Transverse colon (tissue), 4 donors: ENCODE measurements at regions of chr3 and their contacts with region 1.

Region 1: GRCh38 chr3:66276705-66277274 is 56.0 kb downstream of the SLC25A26 start:
- DNase-seq: peak; percentile 58
- H3K4me3 ChIP-seq: no peak overlapping the region
- H3K27ac ChIP-seq: peak overlapping the region in 1 of 4 donors; percentile 1
- H3K4me1 ChIP-seq: peaks cover 0 to 4% (median 0%) of the 10 kb centered on the region in 4 donors
- H3K27me3 ChIP-seq: no peaks in the 10 kb centered on the region
- CTCF ChIP-seq: peak; percentile 62 to 72 (median 68)
- EP300 ChIP-seq: no peak
- POLR2A ChIP-seq: no peak

Region 2: GRCh38 chr3:66010739-66011655 is 265.8 kb before region 1 on chr3:
- in situ Hi-C with region 1: no loop called
- intact Hi-C with region 1: no loop called
- DNase-seq: no peak
- H3K4me3 ChIP-seq: no peak overlapping the region
- H3K27ac ChIP-seq: no peak overlapping the region
- H3K4me1 ChIP-seq: peaks cover 0 to 4% (median 2%) of the 10 kb centered on the region in 4 donors
- H3K27me3 ChIP-seq: no peaks in the 10 kb centered on the region
- CTCF ChIP-seq: no peak
- EP300 ChIP-seq: no peak
- POLR2A ChIP-seq: no peak

Region 3: DNA sequence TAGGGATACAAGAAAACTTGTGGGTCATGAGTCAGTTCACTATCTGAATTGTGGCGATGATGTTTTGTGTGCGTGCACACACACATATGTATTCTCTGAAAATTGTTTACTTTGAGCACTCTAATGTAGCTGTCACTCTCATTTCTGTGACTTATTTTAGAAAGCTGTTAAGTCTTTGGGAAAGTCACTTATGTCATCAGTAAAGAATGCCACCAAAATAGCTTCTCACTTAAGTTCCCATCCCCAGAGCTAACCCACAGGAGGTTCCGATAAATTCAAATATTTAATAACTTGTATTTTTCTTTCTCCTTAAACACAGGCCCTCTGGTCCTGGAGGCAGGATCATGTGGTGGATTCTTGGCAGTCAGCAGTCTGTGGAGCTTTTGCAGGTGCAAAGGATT is 85.8 kb after region 1 on chr3:
- in situ Hi-C with region 1: loop called in 1 of 4 experiments (anchors 10 kb)
- intact Hi-C with region 1: no loop called
- DNase-seq: no peak
- H3K4me3 ChIP-seq: no peak overlapping the region
- H3K27ac ChIP-seq: no peak overlapping the region
- H3K4me1 ChIP-seq: no peaks in the 10 kb centered on the region
- H3K27me3 ChIP-seq: no peaks in the 10 kb centered on the region
- CTCF ChIP-seq: no peak
- EP300 ChIP-seq: no peak
- POLR2A ChIP-seq: no peak

Region 4: GRCh38 chr3:66372681-66373350 is 96.0 kb after region 1 on chr3:
- in situ Hi-C with region 1: loop called in 1 of 4 experiments (anchors 10 kb)
- intact Hi-C with region 1: loop called (anchors 10 kb)
- DNase-seq: peak; percentile 50
- H3K4me3 ChIP-seq: no peak overlapping the region
- H3K27ac ChIP-seq: no peak overlapping the region
- H3K4me1 ChIP-seq: peaks cover 5 to 18% (median 16%) of the 10 kb centered on the region in 4 donors
- H3K27me3 ChIP-seq: no peaks in the 10 kb centered on the region
- CTCF ChIP-seq: peak; percentile 15 to 38 (median 26)
- EP300 ChIP-seq: no peak
- POLR2A ChIP-seq: no peak

Region 5: DNA sequence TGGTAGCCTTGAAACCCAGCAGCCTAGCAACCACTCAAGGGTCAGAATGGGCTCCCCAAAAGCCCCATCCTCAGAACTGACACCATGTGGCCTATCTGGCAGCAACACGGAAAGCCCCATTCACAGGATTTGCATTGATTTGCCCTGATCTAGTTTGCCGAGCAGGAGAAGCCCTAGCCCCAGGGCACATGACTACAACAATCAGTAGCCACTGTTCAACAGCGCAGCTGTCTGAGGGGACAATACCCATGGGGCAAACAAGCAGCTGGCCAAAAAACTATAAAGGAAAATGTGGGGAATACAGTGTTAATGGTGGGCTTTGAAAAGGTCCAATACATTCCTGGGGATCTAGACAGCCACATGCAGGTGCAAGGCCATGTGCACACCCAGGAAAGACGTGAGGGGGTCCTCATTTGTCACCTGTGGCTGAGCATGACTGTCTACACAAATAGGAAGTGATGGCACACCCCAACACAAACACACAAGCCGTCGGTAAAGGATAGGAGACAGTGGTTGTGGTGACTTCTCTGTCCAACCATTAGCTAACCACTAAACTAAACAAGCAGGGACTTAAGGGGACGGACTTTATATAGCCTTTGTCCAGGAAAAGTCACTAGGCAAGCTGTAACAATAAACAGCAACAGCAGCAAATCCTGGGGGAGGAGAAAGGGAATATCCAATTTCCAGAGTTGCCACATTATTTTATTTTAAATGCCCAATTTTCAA is 110.3 kb after region 1 on chr3:
- in situ Hi-C with region 1: loop called in 1 of 4 experiments (anchors 10 kb)
- intact Hi-C with region 1: no loop called
- DNase-seq: no peak
- H3K4me3 ChIP-seq: no peak overlapping the region
- H3K27ac ChIP-seq: no peak overlapping the region
- H3K4me1 ChIP-seq: peaks cover 0 to under 1% (median 0%) of the 10 kb centered on the region in 4 donors
- H3K27me3 ChIP-seq: no peaks in the 10 kb centered on the region
- CTCF ChIP-seq: no peak
- EP300 ChIP-seq: no peak
- POLR2A ChIP-seq: no peak

Region 6: DNA sequence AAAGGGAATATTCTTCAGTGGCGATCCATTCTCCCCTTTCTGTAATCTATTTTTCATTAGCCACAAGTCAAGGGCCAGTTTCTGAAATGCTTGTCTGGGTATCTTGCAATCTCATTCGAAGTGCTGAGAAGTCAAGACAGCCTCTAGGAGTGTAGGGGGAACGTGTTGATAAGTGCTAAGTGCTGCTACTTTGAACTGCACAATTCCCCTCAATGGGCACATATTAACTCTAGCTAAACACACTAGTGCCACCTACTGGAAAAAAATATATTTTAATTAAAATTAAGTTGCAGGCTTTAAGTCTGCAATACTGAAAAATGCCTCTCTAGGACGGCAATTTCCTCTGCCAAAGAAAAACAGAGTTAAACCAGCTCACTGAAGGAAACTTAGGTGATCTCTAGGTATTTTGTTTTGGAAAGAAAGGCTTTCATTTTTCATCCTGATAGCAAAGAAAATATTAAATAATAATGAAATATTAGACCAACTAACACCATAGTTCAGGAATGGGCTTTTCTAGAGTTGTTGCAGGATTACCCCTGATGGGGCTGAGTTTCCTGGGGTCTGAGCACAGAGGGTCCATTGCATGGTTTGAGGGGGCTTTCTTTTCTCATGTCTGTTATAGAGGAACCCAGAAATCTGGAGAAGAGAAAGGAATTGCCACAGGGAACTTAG is 539.4 kb after region 1 on chr3:
- in situ Hi-C with region 1: loop called (anchors 5 to 10 kb)
- intact Hi-C with region 1: no loop called
- DNase-seq: no peak
- H3K4me3 ChIP-seq: no peak overlapping the region
- H3K27ac ChIP-seq: peak overlapping the region in 1 of 4 donors; percentile 18
- H3K4me1 ChIP-seq: peaks cover 0 to 13% (median 0%) of the 10 kb centered on the region in 4 donors
- H3K27me3 ChIP-seq: no peaks in the 10 kb centered on the region
- CTCF ChIP-seq: peak; percentile 57 to 81 (median 71)
- EP300 ChIP-seq: no peak
- POLR2A ChIP-seq: no peak

Region 7: DNA sequence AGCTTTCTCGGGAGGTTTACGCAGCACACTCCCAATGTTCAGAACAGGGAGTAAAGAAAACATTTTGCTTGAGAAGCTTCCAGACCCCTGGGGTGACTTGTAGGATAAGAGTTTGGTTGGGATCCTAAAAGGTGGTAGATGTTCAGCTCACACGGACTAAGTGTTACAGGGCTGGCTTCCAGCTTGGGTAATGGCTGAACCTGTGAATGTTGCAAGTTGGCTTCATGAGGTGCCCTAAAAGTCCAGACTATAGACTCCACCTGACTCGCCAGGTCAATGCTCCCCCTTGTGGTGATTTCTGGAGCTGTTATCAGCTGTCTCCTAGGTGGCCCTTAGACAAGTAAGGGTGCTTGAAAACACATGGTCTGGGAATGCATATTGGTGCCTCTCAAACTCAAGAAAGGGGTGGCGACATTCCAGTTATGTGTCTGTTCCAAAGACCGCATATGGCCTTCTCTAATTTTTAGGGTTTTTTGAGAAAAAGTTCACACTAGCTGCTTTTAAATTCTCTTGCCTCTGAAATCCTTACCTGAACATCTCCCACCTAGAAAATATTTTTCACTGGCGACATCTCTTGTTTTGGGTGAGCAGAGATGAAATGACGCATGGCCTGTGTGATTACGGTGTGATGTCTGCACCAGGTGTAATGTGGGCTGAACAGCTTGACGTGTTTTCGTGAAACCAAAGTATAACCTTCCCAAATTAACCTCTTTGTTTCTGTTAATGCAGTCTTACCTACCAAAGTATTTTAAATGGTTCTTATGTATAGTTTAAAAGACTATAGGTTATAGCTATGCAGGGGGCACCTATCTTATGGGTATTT is 545.6 kb after region 1 on chr3:
- in situ Hi-C with region 1: loop called (anchors 5 to 10 kb)
- intact Hi-C with region 1: no loop called
- DNase-seq: peak; percentile 76
- H3K4me3 ChIP-seq: no peak overlapping the region
- H3K27ac ChIP-seq: no peak overlapping the region
- H3K4me1 ChIP-seq: no peaks in the 10 kb centered on the region
- H3K27me3 ChIP-seq: no peaks in the 10 kb centered on the region
- CTCF ChIP-seq: peak; percentile 72 to 77 (median 74)
- EP300 ChIP-seq: no peak
- POLR2A ChIP-seq: no peak